ENCODE measurements at regions of chr13 and their contacts with region 1.

Region 1: DNA sequence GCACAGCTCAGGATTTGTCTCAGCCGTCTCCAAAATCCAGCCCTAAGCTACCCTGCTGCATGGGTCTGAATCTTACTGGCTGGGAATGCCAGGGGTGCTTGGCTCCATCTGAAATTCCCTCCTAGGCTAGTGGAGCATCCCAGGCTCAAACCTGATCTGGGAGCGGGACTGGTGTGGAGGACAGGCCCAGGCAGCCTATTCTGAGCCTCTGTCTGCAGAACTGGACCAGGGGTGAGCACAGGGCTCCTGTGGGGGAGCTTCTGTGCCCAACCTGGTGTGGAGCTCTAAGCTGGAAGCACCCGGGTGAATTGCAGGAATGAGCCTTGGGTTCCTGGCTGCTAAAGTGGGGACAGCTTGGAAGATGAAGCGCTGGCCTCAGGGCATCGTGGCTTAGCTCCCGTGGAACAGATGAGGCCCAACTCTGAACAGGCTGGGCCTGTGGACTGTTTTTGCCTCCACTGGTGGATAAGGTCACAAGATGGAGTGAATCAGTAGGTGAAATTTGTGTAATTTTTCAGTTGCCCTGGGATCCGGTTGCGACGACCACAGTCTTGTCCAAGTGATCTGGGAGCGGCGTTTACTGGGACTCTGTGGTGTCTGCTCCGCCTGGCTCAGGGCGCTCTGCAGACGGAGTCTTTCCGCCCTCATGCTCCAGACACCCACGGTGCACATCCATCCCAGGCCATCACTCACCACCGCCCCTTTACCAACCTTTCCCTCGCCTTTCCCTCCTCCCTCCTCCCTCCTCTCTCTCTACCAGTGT is 79.5 kb downstream of the TEX29 start:
- DNase-seq: no peak
- ATAC-seq: no peak
- H3K4me3 ChIP-seq: no peak overlapping the region
- H3K4me3 Mint-ChIP-seq: no peak overlapping the region
- H3K27ac ChIP-seq: no peak overlapping the region
- H3K27ac Mint-ChIP-seq: no peak overlapping the region
- H3K4me1 ChIP-seq: no peaks in the 10 kb centered on the region
- H3K4me1 Mint-ChIP-seq: peaks cover 0 to 9% (median 5%) of the 10 kb centered on the region in 7 donors
- H3K27me3 ChIP-seq: no peaks in the 10 kb centered on the region
- H3K27me3 Mint-ChIP-seq: peaks cover 0 to 3% (median 0%) of the 10 kb centered on the region in 5 donors

Region 2: GRCh38 chr13:111270765-111271698 is 128.9 kb before region 1 on chr13:
- CTCF ChIA-PET with region 1: no interaction called
- POLR2A ChIA-PET with region 1: no interaction called
- intact Hi-C with region 1: loop called in 1 of 2 experiments (anchors 10 kb)
- DNase-seq: no peak
- ATAC-seq: no peak
- H3K4me3 ChIP-seq: no peak overlapping the region
- H3K4me3 Mint-ChIP-seq: no peak overlapping the region
- H3K27ac ChIP-seq: no peak overlapping the region
- H3K27ac Mint-ChIP-seq: peak overlapping the region in 3 of 9 donors; percentile 4 to 43 (median 29)
- H3K4me1 ChIP-seq: no peaks in the 10 kb centered on the region
- H3K4me1 Mint-ChIP-seq: peaks cover 0 to 27% (median 5%) of the 10 kb centered on the region in 7 donors
- H3K27me3 ChIP-seq: no peaks in the 10 kb centered on the region
- H3K27me3 Mint-ChIP-seq: no peaks in the 10 kb centered on the region